ENCODE measurements at regions of chr4 and their contacts with region 1.

Region 1: GRCh38 chr4:111330786-111331185 is 707.9 kb upstream of the PITX2 start:
- DNase-seq: no peak
- ATAC-seq: no peak
- H3K4me3 ChIP-seq: no peak overlapping the region
- H3K27ac ChIP-seq: no peak overlapping the region
- H3K4me1 ChIP-seq: no peaks in the 10 kb centered on the region
- H3K27me3 ChIP-seq: no peaks in the 10 kb centered on the region
- CTCF ChIP-seq: no peak

Region 2: GRCh38 chr4:111890412-111890811 is 559.6 kb after region 1 on chr4:
- intact Hi-C with region 1: loop called in 2 of 10 experiments (anchors 10 kb)
- DNase-seq: no peak
- ATAC-seq: no peak
- H3K4me3 ChIP-seq: no peak overlapping the region
- H3K27ac ChIP-seq: no peak overlapping the region
- H3K4me1 ChIP-seq: no peaks in the 10 kb centered on the region
- H3K27me3 ChIP-seq: no peaks in the 10 kb centered on the region
- CTCF ChIP-seq: no peak

Measured in heart right ventricle (tissue), 16 donors.